ENCODE measurements at regions of chr9 and their contacts with region 1.

Region 1: GRCh38 chr9:137200311-137201204 is at the start of gene TPRN:
- DNase-seq: peak; percentile 98
- ATAC-seq: peak; percentile 96
- H3K4me3 ChIP-seq: peak within 1 kb of the TSS; percentile 88
- H3K27ac ChIP-seq: peak within 1 kb of the TSS; percentile 91
- H3K4me1 ChIP-seq: peaks cover 21% of the 10 kb centered on the region
- H3K27me3 ChIP-seq: no peaks in the 10 kb centered on the region
- CTCF ChIP-seq: no peak
- POLR2A ChIP-seq: peak; percentile 95
- RAD21 ChIP-seq: no peak
- total RNA-seq, gene TPRN: 1.7 and 1.8 TPM in 2 replicates

Region 2: GRCh38 chr9:136784249-136784996 is 416.1 kb before region 1 on chr9:
- CTCF ChIA-PET with region 1: no interaction called
- POLR2A ChIA-PET with region 1: no interaction called
- dilution Hi-C with region 1: no loop called
- in situ Hi-C with region 1: no loop called
- intact Hi-C with region 1: no loop called
- DNase-seq: no peak
- ATAC-seq: no peak
- H3K4me3 ChIP-seq: no peak overlapping the region
- H3K27ac ChIP-seq: no peak overlapping the region
- H3K4me1 ChIP-seq: no peaks in the 10 kb centered on the region
- H3K27me3 ChIP-seq: peaks cover 26% of the 10 kb centered on the region
- CTCF ChIP-seq: peak; percentile 32
- POLR2A ChIP-seq: no peak
- RAD21 ChIP-seq: no peak; the same call in 1 of the 2 replicates

Region 3: GRCh38 chr9:137188490-137189296 is 11.9 kb before region 1 on chr9 and contains the starts of genes ANAPC2 and SSNA1:
- CTCF ChIA-PET with region 1: no interaction called
- POLR2A ChIA-PET with region 1: interaction called, 3 read pairs
- dilution Hi-C with region 1: no loop called
- in situ Hi-C with region 1: no loop called
- intact Hi-C with region 1: loop called (anchors 1 kb)
- DNase-seq: peak; percentile 92
- ATAC-seq: peak; percentile 91
- H3K4me3 ChIP-seq: peak within 1 kb of the TSS; percentile 91
- H3K27ac ChIP-seq: peak within 1 kb of the TSS; percentile 73
- H3K4me1 ChIP-seq: peaks cover 16% of the 10 kb centered on the region
- H3K27me3 ChIP-seq: no peaks in the 10 kb centered on the region
- CTCF ChIP-seq: peak; percentile 50
- POLR2A ChIP-seq: peak; percentile 86
- RAD21 ChIP-seq: peak; percentile 42
- total RNA-seq, gene ANAPC2: 9.3 and 9.4 TPM in 2 replicates
- total RNA-seq, gene SSNA1: 55.7 and 63.9 TPM in 2 replicates